ENCODE measurements at regions of chr5 and their contacts with region 1.

Region 1: GRCh38 chr5:135887351-135887864 is 8.2 kb downstream of the IL9 start:
- DNase-seq: peak; percentile 77
- H3K4me3 Mint-ChIP-seq: no peak overlapping the region
- H3K27ac Mint-ChIP-seq: no peak overlapping the region
- H3K4me1 Mint-ChIP-seq: peaks cover 22% of the 10 kb centered on the region
- H3K27me3 Mint-ChIP-seq: peaks cover 21% of the 10 kb centered on the region

Region 2: DNA sequence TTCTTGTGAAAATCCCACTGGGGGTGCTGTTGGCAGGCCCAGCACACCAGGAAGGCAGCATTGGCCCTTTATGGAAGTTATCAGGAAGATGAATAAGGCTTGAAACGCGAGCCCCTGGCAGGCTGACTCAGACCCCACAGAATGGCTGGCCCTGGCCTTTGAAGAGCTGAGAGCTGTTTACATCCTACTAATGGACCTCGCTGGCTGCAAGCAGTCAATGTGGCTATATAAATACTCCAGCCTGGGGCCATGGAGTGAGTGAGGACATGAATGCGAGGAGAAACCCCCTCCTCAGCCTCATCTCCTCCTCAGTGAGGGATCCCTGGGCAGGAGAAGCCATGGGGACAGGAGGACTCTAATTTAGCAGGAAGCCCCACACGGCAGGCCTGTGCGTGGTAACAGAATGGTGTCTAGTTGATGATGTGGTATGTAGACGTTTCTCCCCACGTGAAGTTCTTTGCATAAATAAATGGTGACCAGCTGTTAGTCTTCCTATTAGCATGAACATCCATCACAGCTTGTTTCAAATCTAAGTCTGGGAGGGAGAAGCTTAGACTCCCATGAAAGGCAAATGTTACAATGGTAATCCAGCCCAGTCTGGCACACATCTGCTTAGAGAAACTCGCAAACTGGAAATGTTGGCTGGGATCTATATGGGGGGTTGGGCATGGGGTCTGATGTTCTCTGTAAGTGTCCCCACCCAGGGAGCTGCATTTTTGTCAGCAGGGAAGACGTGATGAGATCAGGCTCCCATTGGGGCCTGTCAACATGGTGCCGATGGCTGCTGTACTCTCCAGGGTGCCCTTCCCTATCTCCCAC is 678.3 kb before region 1 on chr5:
- CTCF ChIA-PET with region 1: no interaction called
- POLR2A ChIA-PET with region 1: no interaction called
- intact Hi-C with region 1: no loop called
- DNase-seq: peak; percentile 8
- H3K4me3 Mint-ChIP-seq: no peak overlapping the region
- H3K27ac Mint-ChIP-seq: no peak overlapping the region
- H3K4me1 Mint-ChIP-seq: no peaks in the 10 kb centered on the region
- H3K27me3 Mint-ChIP-seq: peaks cover 8% of the 10 kb centered on the region

Region 3: GRCh38 chr5:135569755-135570452 is 317.5 kb before region 1 on chr5:
- CTCF ChIA-PET with region 1: no interaction called
- POLR2A ChIA-PET with region 1: no interaction called
- intact Hi-C with region 1: no loop called
- DNase-seq: peak; percentile 17
- H3K4me3 Mint-ChIP-seq: no peak overlapping the region
- H3K27ac Mint-ChIP-seq: no peak overlapping the region
- H3K4me1 Mint-ChIP-seq: no peaks in the 10 kb centered on the region
- H3K27me3 Mint-ChIP-seq: peaks cover 10% of the 10 kb centered on the region

Region 4: DNA sequence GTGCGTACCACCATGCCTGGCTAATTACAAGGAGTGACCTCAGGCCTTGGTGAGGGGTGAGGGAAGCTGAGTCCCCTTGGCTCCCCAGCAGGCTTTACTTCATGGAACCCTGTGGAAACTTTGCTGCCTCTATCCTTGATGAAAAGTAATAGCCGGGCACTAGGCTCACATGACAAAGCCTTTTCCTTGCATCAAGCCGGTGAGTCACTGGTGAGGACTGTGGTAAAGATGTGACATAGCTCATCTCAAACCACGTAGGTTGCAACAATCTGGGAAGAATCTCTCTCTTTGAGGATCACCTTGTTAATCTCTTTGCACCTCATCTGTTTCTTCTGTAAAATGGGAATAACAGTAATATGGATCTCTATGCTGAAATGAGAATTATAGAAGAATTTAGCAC is 169.3 kb before region 1 on chr5:
- CTCF ChIA-PET with region 1: no interaction called
- POLR2A ChIA-PET with region 1: no interaction called
- intact Hi-C with region 1: no loop called
- DNase-seq: no peak
- H3K4me3 Mint-ChIP-seq: no peak overlapping the region
- H3K27ac Mint-ChIP-seq: no peak overlapping the region
- H3K4me1 Mint-ChIP-seq: no peaks in the 10 kb centered on the region
- H3K27me3 Mint-ChIP-seq: no peaks in the 10 kb centered on the region

Region 5: DNA sequence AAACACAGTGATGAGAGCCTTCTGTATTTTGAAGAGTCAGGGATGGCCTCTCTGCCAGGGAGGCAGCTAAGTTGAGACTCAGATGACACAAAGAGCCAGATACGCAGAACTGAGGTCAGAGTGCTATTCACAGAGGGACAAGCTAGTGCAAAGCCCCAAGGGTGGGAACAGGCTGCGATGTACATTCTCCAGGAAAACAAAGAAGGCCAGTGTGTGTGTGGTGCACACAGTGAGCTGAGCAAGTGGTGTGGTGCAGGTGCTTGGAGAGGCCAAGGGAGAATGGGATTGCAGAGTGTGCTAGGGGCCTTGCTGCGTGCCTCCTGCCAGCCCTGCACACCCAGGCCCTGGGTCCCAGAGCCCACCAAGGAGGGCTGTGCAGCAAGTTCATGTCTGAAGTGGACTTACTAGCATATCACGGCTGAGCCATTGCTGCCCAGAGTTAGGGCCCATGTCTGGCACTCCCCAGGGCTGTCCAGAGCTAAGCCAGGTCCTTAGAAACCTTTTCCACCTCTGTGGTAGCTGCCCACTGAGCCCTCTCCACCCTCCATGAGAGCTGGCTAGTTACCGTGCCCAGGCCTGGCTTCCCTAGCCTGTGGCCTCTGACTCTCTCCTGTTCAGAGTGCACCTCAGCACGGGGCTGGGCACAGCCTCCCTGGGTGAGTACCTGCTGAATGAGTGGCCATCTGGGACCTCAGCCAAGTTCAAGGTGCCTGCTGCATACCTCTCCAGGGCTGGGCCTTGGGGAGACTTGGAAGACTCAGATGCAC is 43.7 kb before region 1 on chr5:
- CTCF ChIA-PET with region 1: no interaction called
- POLR2A ChIA-PET with region 1: no interaction called
- intact Hi-C with region 1: no loop called
- DNase-seq: no peak
- H3K4me3 Mint-ChIP-seq: no peak overlapping the region
- H3K27ac Mint-ChIP-seq: no peak overlapping the region
- H3K4me1 Mint-ChIP-seq: no peaks in the 10 kb centered on the region
- H3K27me3 Mint-ChIP-seq: peaks cover 7% of the 10 kb centered on the region

Region 6: GRCh38 chr5:135916638-135917254 is 29.3 kb after region 1 on chr5:
- CTCF ChIA-PET with region 1: interaction called, 22 read pairs
- POLR2A ChIA-PET with region 1: interaction called, 16 read pairs
- intact Hi-C with region 1: loop called (anchors 1 kb)
- DNase-seq: peak; percentile 22
- H3K4me3 Mint-ChIP-seq: no peak overlapping the region
- H3K27ac Mint-ChIP-seq: no peak overlapping the region
- H3K4me1 Mint-ChIP-seq: peaks cover 23% of the 10 kb centered on the region
- H3K27me3 Mint-ChIP-seq: peaks cover 30% of the 10 kb centered on the region

Region 7: DNA sequence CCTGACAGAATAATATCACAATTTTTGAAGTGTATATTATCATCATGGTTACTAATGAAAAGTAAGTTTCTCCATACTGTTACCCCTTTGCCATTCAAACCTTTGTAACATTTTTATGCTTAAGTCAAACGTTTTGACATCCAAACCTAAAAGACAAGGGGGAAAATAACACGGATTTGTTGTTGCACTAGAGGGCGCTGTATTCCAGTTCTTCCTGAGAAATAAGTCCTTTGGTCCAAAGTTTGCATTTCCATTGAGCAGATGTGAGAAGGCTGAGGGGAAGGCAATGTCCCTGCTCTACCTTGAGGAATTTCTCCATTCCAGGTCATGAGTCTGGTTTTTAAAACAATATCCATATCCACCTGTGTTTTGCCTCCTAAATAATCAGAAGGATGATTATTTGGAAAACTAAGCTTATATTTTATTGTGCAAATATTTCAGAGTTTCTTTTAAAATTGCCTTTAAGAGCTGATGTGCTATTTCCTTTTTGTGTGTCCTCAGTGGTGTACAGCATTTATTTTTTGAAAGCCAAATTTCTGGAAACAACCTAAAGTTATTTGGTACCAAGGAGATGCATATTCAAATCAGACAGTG is 57.7 kb after region 1 on chr5:
- CTCF ChIA-PET with region 1: interaction called, 6 read pairs
- POLR2A ChIA-PET with region 1: no interaction called
- intact Hi-C with region 1: loop called (anchors 1 kb)
- DNase-seq: peak; percentile 19
- H3K4me3 Mint-ChIP-seq: no peak overlapping the region
- H3K27ac Mint-ChIP-seq: no peak overlapping the region
- H3K4me1 Mint-ChIP-seq: no peaks in the 10 kb centered on the region
- H3K27me3 Mint-ChIP-seq: peaks cover 14% of the 10 kb centered on the region

Region 8: GRCh38 chr5:136062366-136063274 is 175.2 kb after region 1 on chr5:
- CTCF ChIA-PET with region 1: interaction called, 14 read pairs
- POLR2A ChIA-PET with region 1: no interaction called
- intact Hi-C with region 1: loop called (anchors 1 kb)
- DNase-seq: peak; percentile 29
- H3K4me3 Mint-ChIP-seq: no peak overlapping the region
- H3K27ac Mint-ChIP-seq: no peak overlapping the region
- H3K4me1 Mint-ChIP-seq: no peaks in the 10 kb centered on the region
- H3K27me3 Mint-ChIP-seq: no peaks in the 10 kb centered on the region

Region 9: GRCh38 chr5:136212252-136212721 is 324.9 kb after region 1 on chr5:
- CTCF ChIA-PET with region 1: interaction called, 13 read pairs
- POLR2A ChIA-PET with region 1: no interaction called
- intact Hi-C with region 1: loop called (anchors 1 kb)
- DNase-seq: peak; percentile 56
- H3K4me3 Mint-ChIP-seq: no peak overlapping the region
- H3K27ac Mint-ChIP-seq: no peak overlapping the region
- H3K4me1 Mint-ChIP-seq: no peaks in the 10 kb centered on the region
- H3K27me3 Mint-ChIP-seq: peaks cover 16% of the 10 kb centered on the region

Measured in activated CD4-positive, alpha-beta memory T cell treated with anti-CD3 and anti-CD28 coated beads for 36 hours (primary cell).